Heart left ventricle (tissue), 16 donors: ENCODE measurements at regions of chr3 and their contacts with region 1.

Region 1: GRCh38 chr3:114152519-114153151 is 26.2 kb downstream of the DRD3 start:
- DNase-seq: peak; percentile 78 to 91 (median 82)
- ATAC-seq: peak; percentile 83 to 94 (median 92)
- H3K4me3 ChIP-seq: peak overlapping the region in 11 of 12 donors; percentile 9 to 61 (median 52)
- H3K27ac ChIP-seq: peak overlapping the region in 1 of 12 donors; percentile 11
- H3K4me1 ChIP-seq: peaks cover 0 to 11% (median 4%) of the 10 kb centered on the region in 12 donors
- H3K27me3 ChIP-seq: no peaks in the 10 kb centered on the region
- CTCF ChIP-seq: peak; percentile 81 to 99 (median 92)
- POLR2A ChIP-seq: no peak

Region 2: DNA sequence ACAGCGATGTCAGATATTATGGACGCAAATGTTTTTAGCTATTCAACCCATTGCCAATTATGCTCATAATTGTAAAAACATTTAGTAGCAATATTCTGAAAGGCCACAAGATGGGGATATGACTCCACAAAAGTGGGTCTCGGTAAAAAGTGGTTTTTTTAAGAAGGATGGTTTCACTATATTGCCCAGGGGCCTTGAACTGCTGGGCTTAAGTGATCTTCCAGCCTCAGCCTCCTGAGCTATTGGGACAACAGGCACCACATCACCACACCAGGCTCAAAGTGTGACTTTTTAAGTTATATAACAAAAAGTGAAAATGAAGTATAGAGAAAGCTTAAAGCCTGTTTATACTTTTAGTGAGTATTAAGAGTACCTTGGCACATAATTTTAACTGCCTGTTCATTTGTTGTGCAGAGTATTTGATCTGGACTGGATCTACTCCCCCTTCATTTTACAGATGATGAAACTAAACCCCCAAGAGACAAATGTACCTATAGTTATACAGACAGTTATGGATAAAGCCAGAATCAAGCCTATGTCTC is 416.0 kb before region 1 on chr3:
- intact Hi-C with region 1: loop called in 4 of 10 experiments (anchors 5 to 10 kb)
- DNase-seq: no peak
- ATAC-seq: peak; percentile 53 to 76 (median 63)
- H3K4me3 ChIP-seq: no peak overlapping the region
- H3K27ac ChIP-seq: peak overlapping the region in 1 of 12 donors; percentile 15
- H3K4me1 ChIP-seq: peaks cover 0 to 39% (median 16%) of the 10 kb centered on the region in 12 donors
- H3K27me3 ChIP-seq: no peaks in the 10 kb centered on the region
- CTCF ChIP-seq: peak; percentile 40 to 80 (median 68)
- POLR2A ChIP-seq: no peak

Region 3: DNA sequence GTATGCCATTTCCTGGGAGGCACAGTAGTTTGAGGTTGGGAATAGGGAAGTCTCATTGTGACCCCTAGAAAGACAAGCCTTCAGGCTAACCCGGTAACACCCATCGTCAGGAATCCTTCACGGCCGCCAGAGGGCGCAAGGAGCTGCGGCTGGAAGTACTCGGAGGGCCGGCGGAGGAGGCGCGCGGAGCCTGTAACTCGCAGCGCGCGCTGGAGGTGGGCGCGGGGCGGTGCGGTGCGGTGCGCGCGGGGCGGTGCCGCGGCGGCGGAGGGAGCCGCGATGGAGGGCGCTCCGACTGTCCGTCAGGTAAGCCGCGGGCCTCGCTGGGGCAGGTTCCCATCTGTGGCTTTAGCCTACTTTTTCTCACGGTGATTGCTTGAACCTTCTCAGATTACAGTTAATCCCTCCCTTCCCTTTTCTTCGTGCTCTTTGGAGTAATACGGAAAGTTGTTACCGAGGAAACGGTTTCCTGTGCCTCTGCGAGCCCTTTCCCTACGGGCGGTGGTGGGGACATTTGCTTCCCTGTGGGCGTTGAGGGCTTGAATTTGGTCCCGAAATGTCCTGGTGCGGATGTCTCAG is 313.9 kb before region 1 on chr3 and contains the start of gene GRAMD1C:
- intact Hi-C with region 1: loop called in 3 of 10 experiments (anchors 5 to 10 kb)
- DNase-seq: peak; percentile 85 to 94 (median 86)
- ATAC-seq: peak; percentile 68 to 100 (median 98)
- H3K4me3 ChIP-seq: peak within 1 kb of the TSS; percentile 33 to 66 (median 56)
- H3K27ac ChIP-seq: peak within 1 kb of the TSS in 7 of 12 donors; percentile 5 to 61 (median 49)
- H3K4me1 ChIP-seq: peaks cover 0 to 8% (median 0%) of the 10 kb centered on the region in 12 donors
- H3K27me3 ChIP-seq: no peaks in the 10 kb centered on the region
- CTCF ChIP-seq: peak; percentile 71 to 94 (median 87)
- POLR2A ChIP-seq: peak in 1 of 2 donors; percentile 21
- total RNA-seq, gene GRAMD1C: 0.49 to 5.6 (median 1.2) TPM

Region 4: GRCh38 chr3:114056130-114057010 is 96.3 kb before region 1 on chr3 and contains the starts of genes CCDC191 and QTRT2:
- intact Hi-C with region 1: loop called in 1 of 10 experiments (anchors 5 kb)
- DNase-seq: peak; percentile 98 to 99 (median 99)
- ATAC-seq: peak; percentile 99 to 100 (median 100)
- H3K4me3 ChIP-seq: peak within 1 kb of the TSS; percentile 46 to 92 (median 75)
- H3K27ac ChIP-seq: peak within 1 kb of the TSS in 11 of 12 donors; percentile 74 to 88 (median 82)
- H3K4me1 ChIP-seq: peaks cover 0 to 28% (median 15%) of the 10 kb centered on the region in 12 donors
- H3K27me3 ChIP-seq: no peaks in the 10 kb centered on the region
- CTCF ChIP-seq: peak in 1 of 12 donors; percentile 6
- POLR2A ChIP-seq: peak in 1 of 2 donors; percentile 39
- total RNA-seq, gene CCDC191: 0.38 to 3.2 (median 1.2) TPM
- total RNA-seq, gene QTRT2: 2.7 to 12.2 (median 5.7) TPM

Region 5: GRCh38 chr3:114122027-114122709 is 30.5 kb before region 1 on chr3:
- intact Hi-C with region 1: loop called in 1 of 10 experiments (anchors 2 kb)
- DNase-seq: peak in 2 of 5 donors; percentile 30 to 50
- ATAC-seq: peak; percentile 74 to 97 (median 83)
- H3K4me3 ChIP-seq: no peak overlapping the region
- H3K27ac ChIP-seq: peak overlapping the region; percentile 27 to 84 (median 62)
- H3K4me1 ChIP-seq: peaks cover 0 to 22% (median 7%) of the 10 kb centered on the region in 12 donors
- H3K27me3 ChIP-seq: no peaks in the 10 kb centered on the region
- CTCF ChIP-seq: no peak
- POLR2A ChIP-seq: no peak

Region 6: DNA sequence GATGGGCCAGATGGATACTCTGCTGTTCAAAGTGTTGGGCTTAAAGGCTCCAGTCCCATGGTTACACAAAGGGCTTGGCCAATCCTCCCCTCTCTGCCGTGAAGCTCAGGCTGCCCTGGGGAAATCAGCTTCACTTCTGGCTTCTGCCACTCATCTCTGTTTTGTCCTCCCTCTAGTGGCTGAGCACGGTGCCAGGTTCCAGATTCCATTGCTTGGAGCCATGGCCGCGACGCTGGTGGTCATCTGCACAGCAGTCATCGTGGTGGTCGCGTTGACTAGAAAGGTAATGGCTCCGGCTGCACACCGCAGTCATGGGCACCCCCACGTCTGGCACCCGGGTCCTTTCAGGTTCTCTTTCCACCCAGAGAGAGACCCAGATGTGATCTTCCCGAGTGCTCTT is 146.8 kb after region 1 on chr3:
- intact Hi-C with region 1: loop called in 4 of 10 experiments (anchors 2 to 10 kb)
- DNase-seq: peak in 2 of 5 donors; percentile 16 to 33
- ATAC-seq: peak in 2 of 4 donors; percentile 52 to 64
- H3K4me3 ChIP-seq: no peak overlapping the region
- H3K27ac ChIP-seq: no peak overlapping the region
- H3K4me1 ChIP-seq: no peaks in the 10 kb centered on the region
- H3K27me3 ChIP-seq: no peaks in the 10 kb centered on the region
- CTCF ChIP-seq: peak in 9 of 12 donors; percentile 4 to 40 (median 15)
- POLR2A ChIP-seq: no peak

Region 7: GRCh38 chr3:114336122-114336697 is 183.6 kb after region 1 on chr3:
- intact Hi-C with region 1: loop called in 3 of 10 experiments (anchors 10 kb)
- DNase-seq: no peak
- ATAC-seq: no peak
- H3K4me3 ChIP-seq: no peak overlapping the region
- H3K27ac ChIP-seq: no peak overlapping the region
- H3K4me1 ChIP-seq: peaks cover 0 to 27% (median 7%) of the 10 kb centered on the region in 12 donors
- H3K27me3 ChIP-seq: no peaks in the 10 kb centered on the region
- CTCF ChIP-seq: peak; percentile 27 to 57 (median 39)
- POLR2A ChIP-seq: no peak